Activated CD4-positive, alpha-beta T cell treated with anti-CD3 and anti-CD28 coated beads for 36 hours (primary cell): ENCODE measurements at regions of chr20 and their contacts with region 1.

Region 1: GRCh38 chr20:63253438-63254236 is 626 bp downstream of the NKAIN4 start:
- DNase-seq: no peak
- ATAC-seq: no peak
- H3K4me3 Mint-ChIP-seq: no peak overlapping the region
- H3K27ac Mint-ChIP-seq: no peak overlapping the region
- H3K4me1 Mint-ChIP-seq: peaks cover 3% of the 10 kb centered on the region
- H3K27me3 Mint-ChIP-seq: peaks cover 41% of the 10 kb centered on the region

Region 2: GRCh38 chr20:61494763-61495575 is 1758.7 kb before region 1 on chr20:
- CTCF ChIA-PET with region 1: no interaction called
- POLR2A ChIA-PET with region 1: no interaction called
- intact Hi-C with region 1: no loop called
- DNase-seq: no peak
- ATAC-seq: no peak
- H3K4me3 Mint-ChIP-seq: no peak overlapping the region
- H3K27ac Mint-ChIP-seq: no peak overlapping the region
- H3K4me1 Mint-ChIP-seq: no peaks in the 10 kb centered on the region
- H3K27me3 Mint-ChIP-seq: no peaks in the 10 kb centered on the region

Region 3: GRCh38 chr20:63223221-63224207 is 30.1 kb before region 1 on chr20:
- CTCF ChIA-PET with region 1: interaction called, 13 read pairs
- POLR2A ChIA-PET with region 1: interaction called, 3 read pairs
- intact Hi-C with region 1: loop called in 1 of 2 experiments (anchors 2 kb)
- DNase-seq: peak; percentile 68
- ATAC-seq: peak; percentile 75
- H3K4me3 Mint-ChIP-seq: no peak overlapping the region
- H3K27ac Mint-ChIP-seq: no peak overlapping the region
- H3K4me1 Mint-ChIP-seq: no peaks in the 10 kb centered on the region
- H3K27me3 Mint-ChIP-seq: peaks cover 4% of the 10 kb centered on the region